Natural killer cell (primary cell): ENCODE measurements at regions of chr4 and their contacts with region 1.

Region 1: GRCh38 chr4:106369456-106370060 is 980 bp upstream of the GIMD1 start:
- DNase-seq: peak in 1 of 2 donors; percentile 42
- ATAC-seq: peak in 1 of 3 donors; percentile 39
- H3K4me3 ChIP-seq: no peak overlapping the region
- H3K4me3 Mint-ChIP-seq: no peak overlapping the region
- H3K27ac ChIP-seq: no peak overlapping the region
- H3K27ac Mint-ChIP-seq: no peak overlapping the region
- H3K4me1 ChIP-seq: no peaks in the 10 kb centered on the region
- H3K4me1 Mint-ChIP-seq: no peaks in the 10 kb centered on the region
- H3K27me3 ChIP-seq: peaks cover 2% of the 10 kb centered on the region
- H3K27me3 Mint-ChIP-seq: peaks cover 7 to 26% of the 10 kb centered on the region in 2 donors
- CTCF ChIP-seq: no peak

Region 2: GRCh38 chr4:106809076-106809475 is 439.5 kb after region 1 on chr4:
- intact Hi-C with region 1: loop called (anchors 2 kb)
- DNase-seq: peak in 1 of 2 donors; percentile 2
- ATAC-seq: peak in 1 of 3 donors; percentile 60
- H3K4me3 ChIP-seq: no peak overlapping the region
- H3K4me3 Mint-ChIP-seq: no peak overlapping the region
- H3K27ac ChIP-seq: no peak overlapping the region
- H3K27ac Mint-ChIP-seq: no peak overlapping the region
- H3K4me1 ChIP-seq: no peaks in the 10 kb centered on the region
- H3K4me1 Mint-ChIP-seq: no peaks in the 10 kb centered on the region
- H3K27me3 ChIP-seq: no peaks in the 10 kb centered on the region
- H3K27me3 Mint-ChIP-seq: no peaks in the 10 kb centered on the region
- CTCF ChIP-seq: no peak